ENCODE measurements at regions of chr18 and their contacts with region 1.

Region 1: GRCh38 chr18:5180254-5180653 is 16.8 kb downstream of the AKAIN1 start:
- DNase-seq: no peak
- ATAC-seq: no peak
- H3K4me3 ChIP-seq: no peak overlapping the region
- H3K4me3 Mint-ChIP-seq: no peak overlapping the region
- H3K27ac ChIP-seq: no peak overlapping the region
- H3K27ac Mint-ChIP-seq: no peak overlapping the region
- H3K4me1 ChIP-seq: peaks cover 2% of the 10 kb centered on the region
- H3K4me1 Mint-ChIP-seq: peaks cover 22% of the 10 kb centered on the region
- H3K27me3 ChIP-seq: peaks cover 0 to 3% of the 10 kb centered on the region in 2 experiments
- H3K27me3 Mint-ChIP-seq: no peaks in the 10 kb centered on the region
- CTCF ChIP-seq: no peak

Region 2: DNA sequence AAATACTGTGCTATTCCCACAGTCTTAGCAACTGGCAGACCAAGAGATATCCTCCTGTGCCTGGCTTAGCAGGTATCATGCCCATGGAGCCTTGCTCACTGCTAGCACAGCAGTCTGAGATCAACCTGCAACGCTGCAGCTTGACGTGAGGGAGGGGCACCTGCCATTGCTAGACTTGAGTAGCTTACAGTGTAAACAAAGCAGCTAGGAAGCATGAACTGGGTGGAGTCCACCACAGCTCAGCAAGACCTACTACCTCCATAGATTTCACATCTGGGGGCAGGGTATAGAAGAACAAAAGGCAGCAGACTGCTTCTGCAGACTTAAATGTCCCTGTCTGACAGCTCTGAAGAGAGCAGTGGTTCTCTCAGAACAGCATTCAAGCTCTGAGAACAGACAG is 58.0 kb before region 1 on chr18:
- CTCF ChIA-PET with region 1: no interaction called
- POLR2A ChIA-PET with region 1: no interaction called
- intact Hi-C with region 1: loop called in 1 of 2 experiments (anchors 10 kb)
- DNase-seq: peak in 5 of 14 experiments; percentile 5 to 20 (median 18)
- ATAC-seq: peak; percentile 91
- H3K4me3 ChIP-seq: no peak overlapping the region
- H3K4me3 Mint-ChIP-seq: no peak overlapping the region
- H3K27ac ChIP-seq: no peak overlapping the region
- H3K27ac Mint-ChIP-seq: peak overlapping the region; percentile 70
- H3K4me1 ChIP-seq: peaks cover 7% of the 10 kb centered on the region
- H3K4me1 Mint-ChIP-seq: peaks cover 10% of the 10 kb centered on the region
- H3K27me3 ChIP-seq: no peaks in the 10 kb centered on the region
- H3K27me3 Mint-ChIP-seq: no peaks in the 10 kb centered on the region
- CTCF ChIP-seq: no peak